Aorta (tissue), 5 donors: ENCODE measurements at regions of chr17 and their contacts with region 1.

Region 1: GRCh38 chr17:38705803-38706504 is 881 bp downstream of the MLLT6 start:
- DNase-seq: peak; percentile 71 to 87
- ATAC-seq: no peak
- H3K4me3 ChIP-seq: peak overlapping the region; percentile 85 to 87
- H3K27ac ChIP-seq: peak overlapping the region in 1 of 2 donors; percentile 64
- H3K4me1 ChIP-seq: peaks cover 0 to 3% of the 10 kb centered on the region in 2 donors
- H3K27me3 ChIP-seq: no peaks in the 10 kb centered on the region

Region 2: DNA sequence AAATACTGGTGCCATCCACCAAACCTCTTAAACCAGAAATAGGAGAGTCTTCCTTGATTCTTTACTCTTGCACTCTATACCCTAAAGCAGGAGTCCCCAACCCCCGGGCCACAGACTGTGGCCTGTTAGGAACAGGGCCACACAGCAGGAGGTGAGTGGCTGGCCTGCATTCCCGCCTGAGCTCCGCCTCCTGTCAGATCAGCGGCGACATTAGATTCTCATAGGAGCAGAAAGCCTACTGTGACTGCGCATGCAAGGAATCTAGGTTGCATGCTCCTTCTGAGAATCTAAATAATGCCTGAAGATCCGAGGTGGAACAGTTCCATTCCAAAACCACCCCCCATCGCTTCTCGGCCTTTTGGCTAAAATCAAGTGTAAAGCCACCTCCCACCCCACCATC is 69.9 kb before region 1 on chr17:
- intact Hi-C with region 1: no loop called
- DNase-seq: peak in 1 of 2 donors; percentile 56
- ATAC-seq: no peak
- H3K4me3 ChIP-seq: no peak overlapping the region
- H3K27ac ChIP-seq: no peak overlapping the region
- H3K4me1 ChIP-seq: no peaks in the 10 kb centered on the region
- H3K27me3 ChIP-seq: no peaks in the 10 kb centered on the region

Region 3: DNA sequence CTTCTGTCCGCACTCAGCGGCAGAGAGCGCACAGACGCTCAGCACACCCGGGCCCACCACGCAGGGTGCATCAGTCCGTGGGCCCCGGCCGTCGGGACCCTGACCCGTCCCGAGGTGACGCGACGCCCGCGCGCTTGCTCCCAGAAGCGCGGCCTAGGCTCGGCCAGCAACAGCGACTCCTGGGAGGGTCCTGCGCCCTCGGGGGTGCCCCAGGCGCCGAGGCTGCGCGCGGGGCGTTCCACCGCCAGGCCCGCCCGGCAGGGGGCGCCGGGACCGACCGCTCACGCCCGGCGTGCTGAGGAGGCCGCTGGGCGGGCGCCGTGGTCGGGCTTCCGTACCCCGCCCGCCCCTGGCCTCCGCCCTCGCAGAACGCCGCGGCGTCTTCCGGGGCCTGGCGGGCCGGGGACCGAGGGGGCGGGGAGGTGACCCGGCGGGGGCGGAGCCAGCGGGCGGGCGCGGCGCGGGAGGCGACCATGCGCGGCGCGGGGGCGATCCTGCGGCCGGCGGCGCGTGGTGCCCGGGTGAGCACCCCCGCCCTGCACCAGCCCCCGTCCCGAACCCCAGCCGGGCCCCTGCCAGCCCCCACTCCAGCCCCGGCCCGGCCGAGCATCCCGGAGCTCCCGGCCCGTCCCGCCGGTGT is 24.1 kb after region 1 on chr17 and contains the start of gene CISD3:
- intact Hi-C with region 1: loop called in 1 of 2 experiments (anchors 2 kb)
- DNase-seq: peak; percentile 91 to 96
- ATAC-seq: peak; percentile 93
- H3K4me3 ChIP-seq: peak within 1 kb of the TSS; percentile 50 to 69
- H3K27ac ChIP-seq: peak within 1 kb of the TSS in 1 of 2 donors; percentile 84
- H3K4me1 ChIP-seq: no peaks in the 10 kb centered on the region
- H3K27me3 ChIP-seq: no peaks in the 10 kb centered on the region
- total RNA-seq, gene CISD3: 18.3 to 18.8 TPM

Region 4: DNA sequence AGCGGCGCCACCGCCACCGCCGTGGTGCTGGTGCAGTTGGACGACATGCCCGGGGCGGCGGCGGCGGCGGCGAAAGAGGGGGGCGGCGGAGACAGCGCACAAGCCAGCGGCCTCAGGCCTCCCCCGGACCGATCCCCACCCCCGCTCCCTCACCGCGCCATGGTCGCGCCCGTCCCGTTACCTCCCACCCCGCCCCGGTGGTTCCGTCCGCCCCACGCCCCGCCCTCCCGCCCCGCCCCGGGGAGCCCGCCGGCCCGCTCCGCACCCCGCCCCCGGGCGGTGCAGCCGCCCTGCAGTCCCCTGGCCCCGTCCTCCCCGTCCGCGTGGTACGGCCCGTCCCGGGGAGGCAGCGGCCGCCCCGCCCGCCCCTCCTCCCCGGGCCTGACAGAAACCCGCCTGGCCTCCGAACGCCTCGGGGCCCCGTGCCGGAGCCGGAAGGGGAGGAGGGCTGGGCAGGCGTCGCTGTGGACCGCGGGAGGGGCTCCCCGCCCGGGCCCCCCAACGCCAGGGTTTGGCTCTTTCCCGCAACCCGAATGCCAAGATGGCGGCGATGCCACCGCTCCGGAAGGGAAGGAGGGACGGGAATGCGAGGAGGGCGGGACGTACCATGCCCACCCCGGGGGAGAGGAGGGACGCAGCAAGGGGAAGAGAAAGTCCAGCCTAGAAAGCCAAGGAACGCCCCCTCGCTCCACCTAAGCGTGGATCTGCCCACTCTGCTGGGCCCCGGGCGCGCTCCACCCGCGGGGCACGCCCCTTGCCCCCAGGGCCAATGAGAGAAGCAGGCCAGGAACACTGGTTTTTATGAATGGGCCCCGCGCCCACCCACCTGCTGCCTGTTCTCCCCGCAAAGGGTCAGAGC is 93.7 kb after region 1 on chr17 and contains the start of gene PIP4K2B:
- intact Hi-C with region 1: no loop called
- DNase-seq: peak; percentile 98
- ATAC-seq: peak; percentile 97
- H3K4me3 ChIP-seq: peak within 1 kb of the TSS; percentile 63 to 68
- H3K27ac ChIP-seq: peak within 1 kb of the TSS; percentile 92 to 93
- H3K4me1 ChIP-seq: peaks cover 0 to 7% of the 10 kb centered on the region in 2 donors
- H3K27me3 ChIP-seq: no peaks in the 10 kb centered on the region
- total RNA-seq, gene PIP4K2B: 32.4 to 48.4 TPM